Left cardiac atrium (tissue), 4 donors: ENCODE measurements at regions of chr3 and their contacts with region 1.

Region 1: GRCh38 chr3:87082796-87083440 is 92.0 kb upstream of the VGLL3 start:
- DNase-seq: no peak
- ATAC-seq: peak; percentile 77 to 80

Region 2: GRCh38 chr3:86257955-86258641 is 824.8 kb before region 1 on chr3:
- intact Hi-C with region 1: no loop called
- DNase-seq: no peak
- ATAC-seq: no peak

Region 3: DNA sequence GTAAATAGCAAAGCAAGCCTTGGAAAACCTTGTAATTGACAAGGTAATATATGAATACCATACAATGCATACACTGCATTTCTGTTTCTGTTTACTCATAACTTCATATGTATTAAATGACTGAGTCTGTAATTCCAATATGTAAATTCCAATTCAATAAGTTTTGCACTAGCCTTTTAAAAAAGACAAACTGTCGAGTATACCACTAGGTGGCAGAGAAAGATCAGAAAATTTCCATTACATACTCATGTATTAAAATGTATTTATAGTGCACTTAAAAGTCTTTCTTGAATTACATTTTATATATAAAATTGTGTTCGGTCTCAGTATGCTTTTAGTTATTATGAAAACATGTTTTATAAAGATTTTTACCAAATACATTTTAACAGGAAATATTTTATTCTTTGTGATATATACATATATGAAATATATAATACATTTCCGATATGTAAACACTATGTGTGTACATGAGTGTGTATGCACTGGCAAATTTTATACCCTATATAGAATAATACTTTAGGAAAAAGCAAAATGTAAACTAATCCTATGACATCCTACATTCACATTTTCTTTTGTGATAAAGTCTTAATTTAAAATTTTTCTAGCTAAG is 308.7 kb before region 1 on chr3:
- intact Hi-C with region 1: loop called (anchors 5 to 10 kb)
- DNase-seq: no peak
- ATAC-seq: no peak

Region 4: GRCh38 chr3:86785386-86785785 is 297.5 kb before region 1 on chr3:
- intact Hi-C with region 1: loop called in 1 of 2 experiments (anchors 5 kb)
- DNase-seq: no peak
- ATAC-seq: peak in 1 of 2 donors; percentile 60